ENCODE measurements at regions of chr12 and their contacts with region 1.

Region 1: DNA sequence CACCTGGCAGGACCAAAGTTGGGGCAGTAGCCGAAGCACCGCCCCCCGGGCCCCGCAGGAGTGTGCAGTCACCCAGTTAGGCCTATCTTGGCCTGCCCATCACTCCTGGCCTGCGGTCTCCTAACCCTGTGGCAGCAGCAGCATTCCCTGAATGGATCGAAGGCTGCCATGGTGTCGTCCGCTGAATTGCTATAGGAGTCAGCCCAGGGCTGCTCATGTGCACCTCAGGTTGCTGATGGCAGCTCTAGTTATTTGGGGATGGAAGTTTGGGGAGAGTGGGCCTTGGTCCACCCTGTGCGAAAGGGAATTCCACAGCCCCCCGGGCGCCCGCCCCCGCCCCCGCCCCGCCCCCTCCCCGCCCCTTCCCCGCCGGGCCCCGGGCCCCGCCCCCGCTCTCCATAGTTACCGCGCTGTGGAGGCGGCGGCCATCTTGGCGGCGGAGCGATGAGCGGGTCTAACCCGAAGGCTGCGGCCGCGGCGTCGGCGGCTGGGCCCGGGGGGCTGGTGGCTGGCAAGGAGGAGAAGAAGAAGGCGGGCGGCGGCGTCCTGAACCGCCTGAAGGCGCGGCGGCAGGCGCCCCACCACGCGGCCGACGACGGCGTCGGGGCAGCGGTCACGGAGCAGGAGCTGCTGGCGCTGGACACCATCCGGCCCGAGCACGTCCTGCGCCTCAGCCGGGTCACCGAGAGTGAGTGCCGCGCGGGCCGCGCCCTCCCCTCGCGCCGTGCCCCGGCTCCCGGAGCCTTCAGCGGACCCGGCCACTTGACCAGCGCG is at the start of gene UNC119B:
- DNase-seq: peak; percentile 83
- H3K4me3 Mint-ChIP-seq: peak within 1 kb of the TSS; percentile 83
- H3K27ac Mint-ChIP-seq: peak within 1 kb of the TSS; percentile 75
- H3K4me1 Mint-ChIP-seq: peaks cover 42% of the 10 kb centered on the region
- H3K27me3 Mint-ChIP-seq: no peaks in the 10 kb centered on the region

Region 2: GRCh38 chr12:120580787-120581723 is 129.2 kb before region 1 on chr12 and contains the start of gene POP5:
- CTCF ChIA-PET with region 1: interaction called, 10 read pairs
- DNase-seq: peak; percentile 97
- H3K4me3 Mint-ChIP-seq: peak within 1 kb of the TSS; percentile 99
- H3K27ac Mint-ChIP-seq: peak within 1 kb of the TSS; percentile 89
- H3K4me1 Mint-ChIP-seq: peaks cover 49% of the 10 kb centered on the region
- H3K27me3 Mint-ChIP-seq: peaks cover 33% of the 10 kb centered on the region

Measured in activated naive CD4-positive, alpha-beta T cell treated with anti-CD3 and anti-CD28 coated beads, Interleukin-2, amount 10 ng/mL, durations not matched to agents 7 days and 5 days (primary cell).